ENCODE measurements at regions of chr15 and their contacts with region 1.

Region 1: DNA sequence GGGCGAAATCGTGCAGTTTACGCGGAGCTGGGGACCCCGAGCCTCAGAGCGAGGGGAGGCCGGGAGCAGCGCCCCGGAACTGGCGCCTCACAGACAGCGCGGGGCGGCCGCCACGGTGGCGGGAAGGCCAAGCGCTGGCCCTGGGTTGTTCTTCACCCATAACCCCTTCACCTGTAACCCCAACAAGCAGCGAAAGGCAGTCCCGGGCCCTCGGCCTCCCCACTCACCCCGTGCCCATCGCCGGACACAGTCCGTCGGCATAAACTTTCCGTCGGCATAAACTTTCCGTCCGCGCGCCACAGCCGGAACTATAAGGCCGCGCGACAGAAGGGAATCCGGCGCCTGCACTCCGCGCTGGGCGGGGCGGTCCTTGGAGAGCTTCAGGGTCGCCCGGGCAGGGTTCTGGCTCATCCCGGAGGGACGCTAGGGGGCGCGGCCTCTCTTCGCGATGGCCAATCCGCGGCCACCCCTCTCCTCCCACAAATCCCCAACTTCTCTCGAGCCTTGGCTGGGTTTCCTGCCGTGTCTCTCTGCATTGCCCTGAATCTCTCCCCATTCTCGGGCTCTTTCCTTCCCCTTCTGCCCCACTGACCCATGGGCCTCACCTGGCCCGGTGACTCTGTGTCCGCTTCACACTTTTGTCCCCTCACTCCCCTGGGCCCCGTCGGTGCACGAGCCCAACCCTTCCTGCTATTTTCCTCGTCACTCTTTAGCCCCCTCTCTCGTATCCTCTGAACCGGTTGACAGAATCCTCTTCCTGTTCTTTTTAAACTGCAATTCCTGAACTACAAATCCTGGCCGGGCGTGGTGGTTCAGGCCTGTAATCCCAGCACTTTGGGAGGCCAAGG is at the start of gene INTS14:
- DNase-seq: peak; percentile 94
- ATAC-seq: peak; percentile 99
- H3K4me3 Mint-ChIP-seq: peak within 1 kb of the TSS; percentile 88
- H3K27ac Mint-ChIP-seq: peak within 1 kb of the TSS; percentile 94
- H3K4me1 Mint-ChIP-seq: peaks cover 36% of the 10 kb centered on the region
- H3K27me3 Mint-ChIP-seq: no peaks in the 10 kb centered on the region
- total RNA-seq, gene INTS14: 41.2 to 43.5 TPM

Region 2: DNA sequence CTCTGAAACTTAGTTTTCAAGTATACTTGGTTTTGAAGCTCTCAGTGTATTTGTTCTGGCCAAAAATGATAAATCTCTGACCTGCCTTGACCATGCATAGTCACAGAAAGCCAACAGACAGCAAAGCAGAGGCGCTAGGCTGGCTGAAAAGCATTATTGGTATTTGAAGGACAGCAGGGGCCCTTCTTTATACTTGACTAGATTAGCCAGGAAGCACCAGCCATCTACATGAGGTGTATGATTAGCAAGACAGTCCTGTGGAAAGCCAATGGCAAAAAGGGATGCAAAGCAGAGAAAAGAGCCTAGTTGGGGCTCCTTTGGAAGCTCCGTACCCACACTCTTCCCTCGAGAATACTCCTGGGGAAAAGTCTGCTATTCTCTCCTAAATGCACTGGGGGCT is 18.5 kb after region 1 on chr15:
- CTCF ChIA-PET with region 1: interaction called, 11 read pairs
- POLR2A ChIA-PET with region 1: no interaction called
- DNase-seq: no peak
- ATAC-seq: no peak
- H3K4me3 Mint-ChIP-seq: no peak overlapping the region
- H3K27ac Mint-ChIP-seq: no peak overlapping the region
- H3K4me1 Mint-ChIP-seq: peaks cover 16% of the 10 kb centered on the region
- H3K27me3 Mint-ChIP-seq: no peaks in the 10 kb centered on the region

Measured in activated CD8-positive, alpha-beta T cell treated with anti-CD3 and anti-CD28 coated beads, Interleukin-2, amount 10 ng/mL, durations not matched to agents 7 days and 5 days (primary cell).